ENCODE measurements at regions of chr6 and their contacts with region 1.

Region 1: GRCh38 chr6:137707590-137708360 is 159.3 kb upstream of the TNFAIP3 start:
- DNase-seq: peak; percentile 78 to 97
- ATAC-seq: peak; percentile 75 to 89 (median 84)
- H3K4me3 ChIP-seq: no peak overlapping the region
- H3K4me3 Mint-ChIP-seq: peak overlapping the region; percentile 82
- H3K27ac ChIP-seq: peak overlapping the region; percentile 85
- H3K27ac Mint-ChIP-seq: peak overlapping the region; percentile 91 to 96
- H3K4me1 ChIP-seq: peaks cover 34% of the 10 kb centered on the region
- H3K4me1 Mint-ChIP-seq: peaks cover 64 to 65% of the 10 kb centered on the region in 2 donors
- H3K27me3 ChIP-seq: no peaks in the 10 kb centered on the region
- H3K27me3 Mint-ChIP-seq: peaks cover 0 to 10% of the 10 kb centered on the region in 2 donors
- CTCF ChIP-seq: peak; percentile 84

Region 2: DNA sequence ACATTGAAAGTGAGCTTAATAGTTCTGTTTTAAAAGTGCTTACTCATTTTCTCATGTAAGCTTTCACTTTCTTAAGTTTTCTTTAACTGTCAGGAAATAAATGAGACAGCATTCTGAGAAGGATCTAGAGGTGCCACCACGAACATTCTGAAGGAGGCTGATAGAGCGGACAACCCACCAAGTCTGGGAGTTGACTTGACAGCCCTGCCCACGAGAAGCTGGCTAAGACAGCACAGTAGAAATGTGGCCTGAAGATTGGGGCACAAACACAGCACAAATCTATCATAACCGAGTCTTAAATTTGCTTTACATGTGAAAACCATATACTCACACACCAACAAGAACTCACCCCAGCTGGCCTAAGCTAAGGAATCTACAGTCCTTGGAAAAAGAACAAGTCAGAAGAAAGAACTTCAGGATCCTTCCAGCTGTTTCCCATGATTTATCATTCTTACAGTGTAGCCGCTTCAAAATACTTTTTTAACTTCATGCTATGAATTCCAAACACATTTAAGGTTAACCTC is 15.0 kb after region 1 on chr6:
- intact Hi-C with region 1: loop called (anchors 2 kb)
- DNase-seq: peak in 1 of 2 donors; percentile 55
- ATAC-seq: peak; percentile 92 to 96 (median 96)
- H3K4me3 ChIP-seq: no peak overlapping the region
- H3K4me3 Mint-ChIP-seq: peak overlapping the region; percentile 21
- H3K27ac ChIP-seq: peak overlapping the region; percentile 43
- H3K27ac Mint-ChIP-seq: peak overlapping the region; percentile 86 to 88
- H3K4me1 ChIP-seq: peaks cover 10% of the 10 kb centered on the region
- H3K4me1 Mint-ChIP-seq: peaks cover 22 to 26% of the 10 kb centered on the region in 2 donors
- H3K27me3 ChIP-seq: no peaks in the 10 kb centered on the region
- H3K27me3 Mint-ChIP-seq: peaks cover 17 to 29% of the 10 kb centered on the region in 2 donors
- CTCF ChIP-seq: no peak

Region 3: DNA sequence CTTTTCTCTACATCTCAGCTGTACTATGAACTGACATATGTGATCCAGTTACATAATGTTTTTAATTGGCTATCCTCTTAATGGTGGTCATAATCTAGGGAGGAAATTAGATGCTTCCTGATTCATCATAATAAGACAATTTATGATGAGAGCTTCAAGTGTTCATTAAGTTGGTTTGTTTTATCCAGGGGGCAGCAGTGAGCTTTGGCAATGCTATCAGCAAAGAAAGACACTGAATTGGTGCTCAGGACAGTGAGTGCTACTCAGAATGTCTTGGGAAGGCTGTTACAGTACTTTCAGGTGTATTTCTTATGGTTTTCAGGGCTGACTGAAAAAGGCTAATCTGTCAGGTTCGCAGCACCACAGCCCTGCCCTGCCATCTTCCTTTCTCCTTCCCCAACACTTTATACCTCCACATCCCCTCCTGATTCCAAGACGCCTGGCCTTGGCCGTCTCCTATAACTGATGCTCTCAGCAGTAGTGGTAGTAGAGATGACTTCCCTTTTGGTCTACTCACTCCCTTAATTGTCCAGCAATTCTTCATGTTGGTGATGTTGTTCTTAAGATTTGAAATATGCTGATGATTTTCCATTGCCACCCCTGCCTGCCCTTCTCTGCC is 92.3 kb after region 1 on chr6:
- intact Hi-C with region 1: loop called (anchors 1 kb)
- DNase-seq: peak in 1 of 2 donors; percentile 93
- ATAC-seq: peak; percentile 83 to 90 (median 89)
- H3K4me3 ChIP-seq: no peak overlapping the region
- H3K4me3 Mint-ChIP-seq: no peak overlapping the region
- H3K27ac ChIP-seq: no peak overlapping the region
- H3K27ac Mint-ChIP-seq: peak overlapping the region; percentile 65 to 67
- H3K4me1 ChIP-seq: peaks cover 20% of the 10 kb centered on the region
- H3K4me1 Mint-ChIP-seq: peaks cover 36 to 38% of the 10 kb centered on the region in 2 donors
- H3K27me3 ChIP-seq: no peaks in the 10 kb centered on the region
- H3K27me3 Mint-ChIP-seq: no peaks in the 10 kb centered on the region
- CTCF ChIP-seq: peak; percentile 76

Region 4: DNA sequence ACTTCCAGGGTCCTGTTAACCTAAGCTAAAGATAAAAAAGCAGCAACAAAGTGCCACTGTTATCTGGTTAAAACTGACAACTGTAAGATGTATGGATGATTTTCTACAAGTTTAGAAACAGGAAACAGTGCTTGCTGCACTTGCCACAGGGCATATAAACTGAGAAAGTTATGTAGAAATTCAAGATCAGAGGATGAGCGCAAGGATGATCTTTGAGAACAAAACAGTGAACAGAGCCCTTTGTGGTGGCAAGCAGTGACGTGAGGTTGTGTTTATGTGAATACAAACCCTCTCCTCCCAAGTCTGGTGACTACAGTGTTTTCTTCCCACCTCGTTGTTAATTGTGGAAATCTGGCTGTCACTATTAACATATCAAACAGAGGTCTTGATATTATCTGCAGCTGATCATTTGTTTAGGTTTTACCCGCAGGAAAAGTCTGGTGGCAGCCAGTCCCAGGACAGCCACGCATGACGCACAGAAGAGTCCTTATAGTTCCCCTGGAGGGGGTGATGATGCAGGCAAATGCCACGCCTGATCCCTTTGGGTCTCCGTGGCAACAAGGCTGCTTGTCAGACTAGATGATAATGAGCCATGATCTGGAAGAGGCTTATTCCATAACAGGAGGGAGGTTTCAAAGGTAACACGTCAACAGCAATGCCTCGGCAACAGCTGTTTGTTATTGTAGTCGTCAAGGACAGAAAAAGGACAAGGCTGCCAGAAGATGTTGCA is 116.2 kb after region 1 on chr6:
- intact Hi-C with region 1: loop called (anchors 1 kb)
- DNase-seq: peak; percentile 65 to 96
- ATAC-seq: peak; percentile 51 to 78 (median 73)
- H3K4me3 ChIP-seq: no peak overlapping the region
- H3K4me3 Mint-ChIP-seq: peak overlapping the region; percentile 29
- H3K27ac ChIP-seq: peak overlapping the region; percentile 85
- H3K27ac Mint-ChIP-seq: peak overlapping the region; percentile 92 to 99
- H3K4me1 ChIP-seq: peaks cover 52% of the 10 kb centered on the region
- H3K4me1 Mint-ChIP-seq: peaks cover 76 to 77% of the 10 kb centered on the region in 2 donors
- H3K27me3 ChIP-seq: no peaks in the 10 kb centered on the region
- H3K27me3 Mint-ChIP-seq: no peaks in the 10 kb centered on the region
- CTCF ChIP-seq: no peak

Region 5: DNA sequence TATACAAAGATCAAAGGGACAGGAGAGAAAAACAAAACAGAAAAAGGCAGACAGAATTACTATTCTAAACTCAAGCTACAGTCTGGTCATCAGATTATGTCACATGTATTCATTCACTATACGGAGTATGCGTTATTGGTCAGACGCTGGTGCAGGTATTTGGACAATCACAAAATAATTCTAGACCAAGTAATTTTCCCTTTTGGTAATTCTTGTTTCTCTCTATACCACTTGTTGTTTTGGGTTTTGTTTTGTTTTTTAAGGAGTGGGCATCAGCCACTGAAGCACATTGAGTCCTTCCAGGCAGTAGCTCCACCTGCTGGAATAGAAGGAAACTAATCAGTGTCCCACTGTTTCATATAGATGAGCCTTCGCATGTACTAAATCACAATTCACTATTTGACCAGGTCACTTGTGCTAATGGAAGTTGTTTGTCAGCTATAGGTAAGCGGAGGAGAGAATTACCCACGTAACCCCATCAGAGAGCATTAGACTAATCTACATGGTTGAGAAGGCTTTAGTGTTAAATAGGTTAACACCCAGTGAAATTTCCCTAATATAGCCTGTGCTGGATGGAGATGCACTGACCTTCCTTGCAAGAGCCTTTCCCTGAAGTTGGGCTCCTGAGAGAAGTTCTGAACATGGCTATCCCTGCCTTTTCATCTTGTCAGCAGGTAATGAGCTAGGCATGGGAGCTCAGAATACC is 237.2 kb after region 1 on chr6:
- intact Hi-C with region 1: loop called (anchors 1 kb)
- DNase-seq: peak in 1 of 2 donors; percentile 69
- ATAC-seq: peak; percentile 79 to 88 (median 86)
- H3K4me3 ChIP-seq: no peak overlapping the region
- H3K4me3 Mint-ChIP-seq: no peak overlapping the region
- H3K27ac ChIP-seq: no peak overlapping the region
- H3K27ac Mint-ChIP-seq: peak overlapping the region in 1 of 2 donors; percentile 30
- H3K4me1 ChIP-seq: peaks cover 2% of the 10 kb centered on the region
- H3K4me1 Mint-ChIP-seq: peaks cover 24 to 27% of the 10 kb centered on the region in 2 donors
- H3K27me3 ChIP-seq: no peaks in the 10 kb centered on the region
- H3K27me3 Mint-ChIP-seq: no peaks in the 10 kb centered on the region
- CTCF ChIP-seq: peak; percentile 79

Region 6: DNA sequence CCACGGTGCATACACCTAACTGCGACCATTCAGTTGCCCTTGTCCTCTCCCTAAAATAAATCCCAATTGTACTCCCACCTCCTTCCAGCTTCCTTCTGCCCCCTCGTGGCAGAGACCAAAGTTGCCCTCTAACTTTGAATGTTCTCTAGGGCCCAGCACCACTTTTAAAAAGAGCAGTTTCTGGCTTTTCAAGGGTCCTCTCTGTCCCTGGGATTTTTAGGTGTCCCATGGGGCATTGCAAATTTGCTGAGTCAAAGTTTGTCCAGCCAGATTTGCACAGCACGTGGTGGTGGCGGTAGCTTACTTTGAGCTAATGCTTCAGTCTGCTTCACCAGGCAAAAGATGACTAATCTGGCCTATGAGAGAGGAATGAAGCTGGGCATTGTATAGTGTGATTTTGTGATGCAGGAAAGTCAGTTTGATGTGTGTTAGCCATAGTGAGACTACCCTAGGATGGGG is 299.3 kb after region 1 on chr6:
- intact Hi-C with region 1: loop called (anchors 1 kb)
- DNase-seq: peak in 1 of 2 donors; percentile 41
- ATAC-seq: no peak
- H3K4me3 ChIP-seq: no peak overlapping the region
- H3K4me3 Mint-ChIP-seq: no peak overlapping the region
- H3K27ac ChIP-seq: no peak overlapping the region
- H3K27ac Mint-ChIP-seq: no peak overlapping the region
- H3K4me1 ChIP-seq: no peaks in the 10 kb centered on the region
- H3K4me1 Mint-ChIP-seq: no peaks in the 10 kb centered on the region
- H3K27me3 ChIP-seq: no peaks in the 10 kb centered on the region
- H3K27me3 Mint-ChIP-seq: peaks cover 7 to 12% of the 10 kb centered on the region in 2 donors
- CTCF ChIP-seq: peak; percentile 41

Measured in natural killer cell (primary cell).